ENCODE measurements at regions of chr2 and their contacts with region 1.

Region 1: DNA sequence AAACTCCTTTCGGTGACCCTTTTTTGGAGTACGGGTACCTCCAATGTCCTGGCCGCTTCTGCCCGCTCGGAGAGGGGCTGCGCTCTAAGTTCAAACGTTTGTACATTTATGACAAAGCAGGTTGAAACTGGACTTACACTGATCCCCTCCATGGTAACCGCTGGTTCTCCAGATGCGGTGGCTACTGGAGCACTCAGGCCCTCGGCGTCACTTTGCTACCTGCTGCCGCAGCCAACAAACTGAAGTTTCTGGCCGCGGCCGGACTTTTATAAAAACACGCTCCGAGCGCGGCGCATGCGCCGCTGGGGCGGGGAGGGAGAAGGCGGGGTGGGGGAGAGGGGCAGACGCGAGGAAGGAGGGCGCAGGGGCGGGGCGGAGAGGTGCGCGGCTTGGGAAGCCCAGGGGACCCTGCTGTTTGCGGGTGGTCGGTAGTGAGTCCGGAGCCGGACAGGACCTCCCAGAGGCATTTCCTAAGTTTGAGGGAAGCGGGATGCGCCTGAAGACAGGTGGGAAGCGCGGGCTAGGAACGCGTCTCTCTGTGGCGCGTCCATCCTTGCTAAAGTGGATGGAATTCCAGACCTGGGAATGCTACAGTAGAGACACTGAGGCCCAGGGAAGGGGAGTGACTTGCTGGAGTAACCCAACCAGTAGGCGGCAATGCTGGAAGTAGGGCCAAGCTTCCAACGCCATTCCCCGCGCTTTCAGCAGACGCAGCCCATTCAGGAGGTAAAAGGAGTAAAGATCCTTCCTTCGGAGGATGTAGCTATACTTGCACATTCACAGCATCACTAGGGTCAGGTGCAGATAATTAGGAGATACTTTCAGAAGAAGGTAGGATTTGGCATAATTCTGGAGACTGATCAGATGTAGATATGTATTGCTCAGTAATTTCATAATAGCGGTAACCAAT is at the start of gene CXCR4:
- DNase-seq: peak; percentile 82
- H3K4me3 Mint-ChIP-seq: peak within 1 kb of the TSS; percentile 95
- H3K27ac Mint-ChIP-seq: peak within 1 kb of the TSS; percentile 91
- H3K4me1 Mint-ChIP-seq: peaks cover 57% of the 10 kb centered on the region
- H3K27me3 Mint-ChIP-seq: no peaks in the 10 kb centered on the region
- total RNA-seq, gene CXCR4: 70.2 to 72.6 TPM

Region 2: GRCh38 chr2:135913727-135914365 is 204.3 kb before region 1 on chr2:
- CTCF ChIA-PET with region 1: interaction called, 4 read pairs
- intact Hi-C with region 1: loop called (anchors 1 kb)
- DNase-seq: peak; percentile 65
- H3K4me3 Mint-ChIP-seq: no peak overlapping the region
- H3K27ac Mint-ChIP-seq: no peak overlapping the region
- H3K4me1 Mint-ChIP-seq: peaks cover 10% of the 10 kb centered on the region
- H3K27me3 Mint-ChIP-seq: no peaks in the 10 kb centered on the region

Region 3: GRCh38 chr2:136052369-136053362 is 65.5 kb before region 1 on chr2:
- CTCF ChIA-PET with region 1: interaction called, 3 read pairs
- intact Hi-C with region 1: loop called (anchors 1 kb)
- DNase-seq: peak; percentile 53
- H3K4me3 Mint-ChIP-seq: peak overlapping the region; percentile 53
- H3K27ac Mint-ChIP-seq: peak overlapping the region; percentile 96
- H3K4me1 Mint-ChIP-seq: peaks cover 88% of the 10 kb centered on the region
- H3K27me3 Mint-ChIP-seq: no peaks in the 10 kb centered on the region

Region 4: DNA sequence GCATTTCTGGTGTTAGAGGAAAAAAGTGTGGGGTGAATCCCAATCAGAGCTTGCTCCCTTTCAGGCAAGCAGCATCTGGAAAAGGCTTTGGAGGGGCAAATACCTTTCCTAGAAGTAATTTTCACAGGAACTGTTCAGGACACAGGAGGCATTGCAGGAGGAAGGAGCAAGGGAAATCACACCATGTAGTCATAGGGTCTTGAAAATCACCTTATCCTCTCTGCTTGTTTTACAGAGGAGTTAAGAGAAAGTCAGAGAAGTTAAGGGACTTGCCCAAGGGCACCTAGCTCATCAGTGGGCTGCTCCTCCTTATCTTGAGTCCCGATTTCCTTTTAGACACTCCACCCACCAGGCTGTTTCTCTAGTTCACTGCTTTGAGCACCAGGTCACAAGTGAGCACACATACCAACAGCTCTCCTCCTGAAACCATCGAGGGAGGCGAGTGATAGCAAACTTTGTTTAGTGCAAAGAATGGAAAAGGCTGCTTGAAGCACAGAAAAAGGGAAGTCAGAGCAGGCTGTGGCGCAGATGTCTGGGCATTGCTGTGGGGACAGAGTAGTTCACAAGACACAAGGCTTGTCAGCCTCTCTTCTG is 89.0 kb after region 1 on chr2:
- CTCF ChIA-PET with region 1: no interaction called
- intact Hi-C with region 1: loop called (anchors 1 kb)
- DNase-seq: peak; percentile 61
- H3K4me3 Mint-ChIP-seq: no peak overlapping the region
- H3K27ac Mint-ChIP-seq: peak overlapping the region; percentile 86
- H3K4me1 Mint-ChIP-seq: peaks cover 37% of the 10 kb centered on the region
- H3K27me3 Mint-ChIP-seq: no peaks in the 10 kb centered on the region

Region 5: DNA sequence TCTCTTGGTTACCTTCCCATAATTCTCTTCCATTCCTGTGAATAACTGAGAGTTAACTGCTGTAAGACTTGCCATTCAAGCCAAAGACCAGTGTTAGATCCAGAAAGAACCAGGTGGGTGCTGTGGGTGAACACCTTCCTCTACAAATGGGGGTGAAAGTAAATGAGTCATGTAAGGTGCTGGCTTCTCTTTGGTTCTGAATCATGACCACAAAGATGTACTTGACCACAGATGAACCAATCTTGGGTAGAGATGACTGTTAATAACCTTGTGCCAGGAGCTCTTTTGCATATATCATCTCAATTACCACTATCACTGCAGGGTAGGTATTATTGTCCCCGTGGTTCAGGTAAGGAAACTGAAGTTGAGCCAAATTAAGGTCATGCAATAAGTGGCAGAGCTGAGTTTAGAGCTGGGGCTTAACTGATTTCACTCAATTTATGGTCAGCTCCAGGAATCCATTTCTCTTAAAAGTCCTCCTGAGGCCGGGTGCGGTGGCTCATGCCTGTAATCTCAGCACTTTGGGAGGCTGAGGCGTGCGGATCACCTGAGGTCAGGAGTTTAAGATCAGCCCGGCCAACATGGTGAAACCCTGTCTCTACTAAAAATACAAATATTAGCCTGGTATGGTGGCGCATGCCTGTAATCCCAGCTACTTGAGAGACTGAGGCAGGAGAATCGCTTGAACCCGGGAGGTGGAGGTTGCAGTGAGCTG is 244.7 kb after region 1 on chr2:
- CTCF ChIA-PET with region 1: no interaction called
- intact Hi-C with region 1: loop called (anchors 1 kb)
- DNase-seq: peak; percentile 68
- H3K4me3 Mint-ChIP-seq: no peak overlapping the region
- H3K27ac Mint-ChIP-seq: peak overlapping the region; percentile 42
- H3K4me1 Mint-ChIP-seq: peaks cover 51% of the 10 kb centered on the region
- H3K27me3 Mint-ChIP-seq: peaks cover 4% of the 10 kb centered on the region

Measured in activated naive CD4-positive, alpha-beta T cell treated with anti-CD3 and anti-CD28 coated beads for 36 hours (primary cell).